GM18951 (cell line): ENCODE measurements at regions of chr5 and their contacts with region 1.

Region 1: GRCh38 chr5:39714036-39714698 is 289.4 kb upstream of the DAB2 start:
- POLR2A ChIP-seq: no peak

Region 2: DNA sequence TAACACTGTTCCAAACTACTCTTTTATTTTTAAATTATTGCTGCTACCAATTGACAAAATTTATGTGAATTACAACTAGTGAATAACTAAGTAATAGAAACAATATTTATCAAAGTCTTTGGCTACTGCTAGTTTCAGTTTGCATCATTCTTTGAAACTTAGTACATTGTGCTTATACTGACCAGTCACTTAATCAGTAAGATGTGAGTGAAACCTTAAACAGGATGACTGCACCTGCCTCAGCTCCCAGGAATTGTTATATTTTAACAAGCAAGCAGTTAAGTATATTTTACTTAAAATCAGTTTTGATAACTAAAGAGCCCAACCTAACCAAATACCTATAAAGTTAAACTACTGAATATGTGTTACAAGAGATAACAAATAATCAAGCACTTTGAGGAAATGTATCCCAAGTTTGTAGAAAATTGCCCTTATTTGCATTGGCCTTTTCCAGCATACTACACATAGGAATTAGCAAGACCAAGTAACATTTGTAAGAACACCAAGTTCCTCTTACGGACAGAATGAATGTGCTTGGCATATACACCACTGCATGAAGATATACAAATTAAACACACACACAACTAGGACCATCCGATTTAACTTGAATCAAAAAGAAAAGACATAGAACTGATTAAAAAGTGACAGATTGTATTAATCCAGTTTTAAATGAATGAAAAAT is 256.1 kb after region 1 on chr5:
- in situ Hi-C with region 1: no loop called
- POLR2A ChIP-seq: no peak

Region 3: GRCh38 chr5:40198736-40199135 is 484.6 kb after region 1 on chr5:
- in situ Hi-C with region 1: no loop called
- POLR2A ChIP-seq: no peak

Region 4: DNA sequence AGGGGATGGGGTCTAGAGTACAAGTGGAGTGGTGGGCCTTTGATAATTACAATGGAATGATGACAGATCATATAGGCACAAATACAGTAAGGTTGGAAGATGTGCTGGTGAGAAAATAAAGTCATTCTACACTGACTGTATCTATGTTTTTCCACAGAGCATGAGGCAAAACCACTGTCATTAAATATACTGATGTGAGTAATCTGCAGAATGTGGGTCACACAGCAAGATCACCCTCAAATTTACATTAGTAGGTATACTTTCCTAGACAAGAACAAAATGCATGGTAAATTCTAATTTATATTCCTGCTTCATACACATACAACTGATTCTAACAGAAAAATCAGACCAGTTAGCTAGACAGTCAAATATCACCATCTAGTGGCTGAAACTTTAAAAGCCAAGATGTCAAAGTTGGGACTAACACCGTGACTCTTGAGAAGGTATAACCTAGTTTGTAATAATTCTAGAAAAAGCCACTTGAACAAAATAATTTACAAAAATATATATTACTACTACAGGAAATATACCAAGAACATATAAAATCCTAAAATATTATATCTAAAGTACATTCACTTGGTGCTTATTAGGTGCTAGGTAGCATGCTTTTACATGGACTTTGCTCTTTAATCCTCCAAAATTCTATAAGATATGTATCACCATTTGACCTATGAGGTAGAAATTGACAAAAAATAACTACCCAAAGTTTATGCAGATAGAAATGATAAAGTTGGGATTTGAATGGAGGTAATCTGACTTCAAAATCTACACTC is 1022.1 kb after region 1 on chr5:
- in situ Hi-C with region 1: loop called (anchors 25 kb)
- POLR2A ChIP-seq: no peak